Activated T-helper 2 cell treated with anti-CD3 and anti-CD28 coated beads, Interferon-gamma antibody, Interleukin-2, Interleukin-4, amounts not matched to agents 10 μg/mL and 5 μg/mL and 100 μg/mL, durations not matched to agents 14 hours and 24 hours and 36 hours (primary cell): ENCODE measurements at regions of chr2 and their contacts with region 1.

Region 1: GRCh38 chr2:175227393-175227792 is 45.9 kb upstream of the ATP5MC3 start:
- DNase-seq: no peak
- H3K4me3 Mint-ChIP-seq: no peak overlapping the region
- H3K27ac Mint-ChIP-seq: peak overlapping the region; percentile 74
- H3K4me1 Mint-ChIP-seq: peaks cover 28% of the 10 kb centered on the region
- H3K27me3 Mint-ChIP-seq: no peaks in the 10 kb centered on the region

Region 2: GRCh38 chr2:175154661-175155082 is 72.7 kb before region 1 on chr2:
- intact Hi-C with region 1: loop called (anchors 1 kb)
- DNase-seq: no peak
- H3K4me3 Mint-ChIP-seq: peak overlapping the region; percentile 34
- H3K27ac Mint-ChIP-seq: peak overlapping the region; percentile 86
- H3K4me1 Mint-ChIP-seq: peaks cover 36% of the 10 kb centered on the region
- H3K27me3 Mint-ChIP-seq: no peaks in the 10 kb centered on the region

Region 3: DNA sequence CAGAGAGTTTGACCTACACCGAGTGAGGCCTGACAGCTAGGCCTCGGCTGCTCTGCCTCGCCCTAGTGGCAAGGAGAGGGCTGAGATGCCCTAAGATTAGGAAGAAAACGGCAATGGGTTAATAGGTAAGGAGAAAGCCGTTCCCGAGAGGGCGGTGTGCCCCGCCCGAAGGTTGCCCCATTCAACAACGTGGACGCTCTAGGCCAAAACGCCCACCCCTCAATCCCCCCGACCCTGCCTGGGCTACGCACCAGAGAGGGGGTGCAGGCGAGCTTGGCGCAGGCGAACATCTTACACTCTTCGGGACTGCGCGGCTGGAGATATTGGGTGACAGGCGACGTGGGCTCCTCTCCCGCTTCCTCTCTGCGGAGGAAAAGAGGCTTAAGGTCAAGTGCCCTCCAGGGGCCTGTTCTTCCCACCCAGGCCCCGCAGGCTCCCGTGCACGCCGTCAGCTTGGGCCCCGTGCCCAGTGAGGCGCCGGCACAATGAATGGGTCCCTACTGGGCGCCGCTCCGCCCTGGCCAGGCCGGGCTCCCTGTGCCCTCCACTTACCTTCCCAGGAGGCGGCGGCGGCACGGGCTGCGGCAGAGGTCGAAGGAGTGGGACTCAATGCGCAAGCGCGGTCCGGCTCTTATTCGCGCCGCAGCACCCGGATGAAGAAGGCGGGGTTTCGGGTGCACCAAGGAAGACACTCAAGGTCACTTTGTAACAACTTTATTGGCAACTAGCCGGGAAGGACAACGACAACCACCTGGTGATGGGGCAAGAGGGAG is 46.1 kb before region 1 on chr2 and contains the start of gene ATP5MC3:
- intact Hi-C with region 1: loop called (anchors 1 kb)
- DNase-seq: peak; percentile 90
- H3K4me3 Mint-ChIP-seq: peak within 1 kb of the TSS; percentile 86
- H3K27ac Mint-ChIP-seq: peak within 1 kb of the TSS; percentile 98
- H3K4me1 Mint-ChIP-seq: peaks cover 21% of the 10 kb centered on the region
- H3K27me3 Mint-ChIP-seq: no peaks in the 10 kb centered on the region
- total RNA-seq, gene ATP5MC3: 417 and 424 TPM in 2 replicates